ENCODE measurements at regions of chr10 and their contacts with region 1.

Region 1: DNA sequence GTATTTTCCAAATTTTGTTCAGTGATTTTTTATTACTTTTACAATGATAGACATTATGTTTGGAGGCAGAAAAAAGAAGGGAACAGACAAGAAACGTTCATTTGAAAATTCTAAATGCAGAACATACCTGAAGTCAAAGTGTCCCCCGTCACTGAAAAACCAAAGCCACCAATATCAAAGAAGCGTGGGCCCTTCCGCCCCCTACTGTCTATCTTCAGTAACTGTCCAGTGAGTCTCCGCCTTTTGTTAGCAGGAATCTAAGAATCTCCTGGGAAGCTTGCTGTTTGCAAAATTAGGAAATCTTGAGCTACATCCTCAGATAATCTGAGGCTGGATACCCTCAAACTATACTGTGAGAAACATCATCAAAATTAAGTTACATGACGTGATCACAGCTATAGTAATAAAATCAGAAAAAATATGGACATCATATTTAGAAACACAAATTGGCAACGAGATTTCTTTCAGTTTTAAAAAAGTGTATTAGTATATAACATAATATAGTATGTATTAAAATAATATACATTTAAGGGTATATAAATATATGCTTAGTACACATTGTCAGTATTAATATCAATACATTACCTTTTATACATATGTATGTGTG is 169.3 kb upstream of the AKR1E2 start:
- DNase-seq: peak; percentile 67
- ATAC-seq: peak; percentile 72
- H3K4me3 ChIP-seq: no peak overlapping the region
- H3K27ac ChIP-seq: no peak overlapping the region
- H3K4me1 ChIP-seq: peaks cover 2% of the 10 kb centered on the region
- H3K27me3 ChIP-seq: no peaks in the 10 kb centered on the region
- CTCF ChIP-seq: peak; percentile 82
- POLR2A ChIP-seq: peak; percentile 45; the same call in 1 of the 2 replicates
- RAD21 ChIP-seq: peak; percentile 96

Region 2: GRCh38 chr10:3197348-3198003 is 1459.2 kb before region 1 on chr10:
- CTCF ChIA-PET with region 1: interaction called, 3 read pairs
- POLR2A ChIA-PET with region 1: no interaction called
- dilution Hi-C with region 1: no loop called
- in situ Hi-C with region 1: no loop called
- intact Hi-C with region 1: loop called (anchors 2 kb)
- DNase-seq: peak; percentile 84
- ATAC-seq: peak; percentile 91
- H3K4me3 ChIP-seq: peak overlapping the region; percentile 37
- H3K27ac ChIP-seq: peak overlapping the region; percentile 12
- H3K4me1 ChIP-seq: peaks cover 10% of the 10 kb centered on the region
- H3K27me3 ChIP-seq: peaks cover 9% of the 10 kb centered on the region
- CTCF ChIP-seq: peak; percentile 95
- POLR2A ChIP-seq: peak; percentile 66
- RAD21 ChIP-seq: peak; percentile 98

Region 3: DNA sequence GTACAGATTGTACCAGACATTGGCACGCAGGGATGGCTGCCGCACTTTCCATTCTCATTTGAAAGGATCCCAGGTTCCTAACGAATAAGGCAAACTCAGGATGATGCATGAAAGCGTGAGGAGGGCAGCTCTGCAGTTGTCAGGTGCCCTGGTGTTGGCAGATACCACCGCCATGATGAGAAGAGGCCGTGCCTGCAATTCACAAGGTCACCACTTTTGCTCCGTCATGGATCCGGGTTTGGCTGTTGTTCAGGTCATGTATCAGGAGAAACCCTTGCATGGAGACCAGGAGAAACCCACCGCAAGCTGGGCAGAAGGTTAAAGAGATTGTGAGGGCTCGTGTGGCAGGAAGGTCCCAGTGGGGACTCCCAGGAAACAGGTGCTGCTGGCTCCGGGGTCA is 1104.9 kb before region 1 on chr10:
- CTCF ChIA-PET with region 1: interaction called, 10 read pairs
- POLR2A ChIA-PET with region 1: no interaction called
- dilution Hi-C with region 1: no loop called
- in situ Hi-C with region 1: no loop called
- intact Hi-C with region 1: no loop called
- DNase-seq: no peak
- ATAC-seq: no peak
- H3K4me3 ChIP-seq: no peak overlapping the region
- H3K27ac ChIP-seq: no peak overlapping the region
- H3K4me1 ChIP-seq: peaks cover 10% of the 10 kb centered on the region
- H3K27me3 ChIP-seq: no peaks in the 10 kb centered on the region
- CTCF ChIP-seq: no peak
- POLR2A ChIP-seq: no peak
- RAD21 ChIP-seq: no peak

Region 4: GRCh38 chr10:4241724-4242345 is 414.8 kb before region 1 on chr10:
- CTCF ChIA-PET with region 1: interaction called, 3 read pairs
- POLR2A ChIA-PET with region 1: no interaction called
- dilution Hi-C with region 1: no loop called
- in situ Hi-C with region 1: loop called (anchors 10 kb)
- intact Hi-C with region 1: loop called (anchors 5 kb)
- DNase-seq: peak; percentile 100
- ATAC-seq: peak; percentile 82
- H3K4me3 ChIP-seq: peak overlapping the region; percentile 4; the same call in 1 of the 2 replicates
- H3K27ac ChIP-seq: peak overlapping the region; percentile 68
- H3K4me1 ChIP-seq: peaks cover 11% of the 10 kb centered on the region
- H3K27me3 ChIP-seq: no peaks in the 10 kb centered on the region
- CTCF ChIP-seq: no peak
- POLR2A ChIP-seq: peak; percentile 73; the same call in 1 of the 2 replicates
- RAD21 ChIP-seq: peak; percentile 20; the same call in 1 of the 2 replicates

Region 5: GRCh38 chr10:4512671-4513240 is 143.9 kb before region 1 on chr10:
- CTCF ChIA-PET with region 1: interaction called, 4 read pairs
- POLR2A ChIA-PET with region 1: no interaction called
- dilution Hi-C with region 1: no loop called
- in situ Hi-C with region 1: no loop called
- intact Hi-C with region 1: loop called (anchors 5 kb)
- DNase-seq: peak; percentile 71
- ATAC-seq: peak; percentile 77
- H3K4me3 ChIP-seq: no peak overlapping the region
- H3K27ac ChIP-seq: no peak overlapping the region
- H3K4me1 ChIP-seq: no peaks in the 10 kb centered on the region
- H3K27me3 ChIP-seq: no peaks in the 10 kb centered on the region
- CTCF ChIP-seq: peak; percentile 67
- POLR2A ChIP-seq: no peak
- RAD21 ChIP-seq: peak; percentile 71

Measured in IMR-90 (cell line).